ENCODE measurements at regions of chr19 and their contacts with region 1.

Region 1: GRCh38 chr19:40407714-40408597 is 5.2 kb downstream of the PRX start:
- DNase-seq: no peak
- H3K4me3 ChIP-seq: no peak overlapping the region
- H3K27ac ChIP-seq: no peak overlapping the region
- H3K4me1 ChIP-seq: no peaks in the 10 kb centered on the region
- H3K27me3 ChIP-seq: no peaks in the 10 kb centered on the region
- CTCF ChIP-seq: no peak

Region 2: DNA sequence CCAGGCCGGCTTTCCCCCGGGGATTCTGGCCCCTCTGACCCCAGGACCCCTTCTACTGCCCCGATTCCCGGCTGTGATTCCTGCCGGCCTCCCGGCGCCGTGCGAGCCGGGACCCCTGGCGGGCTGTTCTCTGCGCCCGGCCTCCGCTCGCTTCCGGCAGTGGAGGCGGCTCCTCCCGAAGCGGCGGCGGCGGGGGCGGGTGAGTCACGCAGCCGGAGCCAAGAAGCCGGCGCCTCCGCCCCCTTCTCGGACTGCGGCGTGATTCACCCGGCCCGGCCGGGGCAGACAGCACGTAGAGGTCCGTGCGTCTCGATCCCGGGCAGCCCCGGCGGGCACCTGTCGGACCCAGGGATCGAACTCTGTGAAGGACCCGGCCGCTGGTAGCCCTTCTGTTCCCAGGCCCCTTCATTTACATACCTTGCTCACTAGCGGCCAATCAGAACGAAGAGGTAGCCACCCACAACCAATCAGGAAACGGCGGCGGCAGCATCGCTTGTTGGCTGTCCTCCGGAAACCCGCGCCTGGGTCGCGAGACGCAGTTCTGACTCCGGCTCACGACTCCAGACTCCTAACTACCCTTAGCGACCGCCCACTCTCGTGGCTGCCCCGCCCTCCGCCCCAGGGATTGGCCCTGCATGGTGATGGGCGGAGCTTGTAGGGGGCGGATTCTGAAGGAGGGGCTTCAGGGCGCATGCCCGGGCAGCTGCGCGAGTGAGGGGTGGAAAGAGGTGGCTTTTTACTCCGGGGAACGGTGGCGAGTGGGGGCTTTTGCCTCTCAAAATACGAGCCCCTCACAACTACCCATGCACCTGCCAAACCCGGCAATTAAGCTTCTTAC is 17.7 kb after region 1 on chr19 and contains the start of gene SERTAD1:
- CTCF ChIA-PET with region 1: interaction called, 14 read pairs
- POLR2A ChIA-PET with region 1: no interaction called
- intact Hi-C with region 1: no loop called
- DNase-seq: peak; percentile 100
- H3K4me3 ChIP-seq: peak within 1 kb of the TSS; percentile 68
- H3K27ac ChIP-seq: peak within 1 kb of the TSS; percentile 91
- H3K4me1 ChIP-seq: peaks cover 6% of the 10 kb centered on the region
- H3K27me3 ChIP-seq: no peaks in the 10 kb centered on the region
- CTCF ChIP-seq: peak; percentile 82
- total RNA-seq, gene SERTAD1: 9.6 and 16.5 TPM in 2 replicates

Measured in A673 (cell line).